ENCODE measurements at regions of chr9 and their contacts with region 1.

Region 1: DNA sequence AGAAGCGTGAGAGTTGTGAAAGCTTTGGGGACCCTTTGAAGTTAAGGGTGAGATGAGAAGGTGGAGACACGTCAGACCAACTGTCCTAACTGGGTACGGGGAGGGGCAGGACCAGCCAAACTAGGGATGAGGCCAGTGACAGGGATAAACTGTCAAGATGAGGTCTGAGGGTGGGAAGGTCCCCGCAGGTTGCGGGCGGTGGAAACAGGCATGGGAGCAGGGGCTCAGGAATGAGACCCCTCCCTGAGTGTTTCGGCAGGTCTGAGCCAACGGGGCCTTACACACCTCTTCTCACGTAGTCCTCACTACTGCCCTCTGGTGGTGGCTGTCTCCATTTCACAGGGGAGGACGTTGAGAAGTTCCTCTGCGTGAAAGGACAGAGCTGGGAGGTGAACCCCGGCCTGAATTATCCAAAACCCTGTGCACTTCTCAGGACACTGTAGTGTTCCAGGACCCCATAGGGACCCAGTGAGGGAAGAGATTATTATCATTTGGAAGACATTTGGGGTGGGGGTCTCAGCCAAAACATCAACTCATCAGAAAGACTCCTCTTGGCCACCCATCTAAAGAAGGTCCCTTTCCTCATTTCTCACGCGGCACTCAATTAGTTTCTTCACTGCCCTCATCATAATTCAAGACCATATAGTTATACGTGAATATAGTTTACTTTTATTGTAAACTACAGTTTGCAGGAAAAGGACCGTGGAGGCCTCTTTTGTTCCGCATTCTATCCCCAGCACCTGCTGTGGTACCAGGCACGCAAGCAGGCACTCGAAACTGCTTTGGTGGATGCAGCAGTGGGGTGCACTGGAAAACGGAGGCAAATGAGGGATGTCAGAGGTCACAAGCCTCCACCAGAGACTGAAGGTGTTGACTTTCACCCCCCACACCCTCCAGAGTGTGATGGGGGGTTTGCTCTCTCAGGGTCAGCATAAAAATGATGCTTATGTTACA is 21.7 kb upstream of the NANS start:
- DNase-seq: peak; percentile 92
- H3K4me3 Mint-ChIP-seq: peak overlapping the region; percentile 27
- H3K27ac Mint-ChIP-seq: no peak overlapping the region
- H3K4me1 Mint-ChIP-seq: peaks cover 8% of the 10 kb centered on the region
- H3K27me3 Mint-ChIP-seq: peaks cover 1% of the 10 kb centered on the region

Region 2: GRCh38 chr9:96122751-96123150 is 1912.1 kb before region 1 on chr9:
- CTCF ChIA-PET with region 1: no interaction called
- POLR2A ChIA-PET with region 1: no interaction called
- intact Hi-C with region 1: no loop called
- DNase-seq: no peak
- H3K4me3 Mint-ChIP-seq: no peak overlapping the region
- H3K27ac Mint-ChIP-seq: no peak overlapping the region
- H3K4me1 Mint-ChIP-seq: peaks cover 5% of the 10 kb centered on the region
- H3K27me3 Mint-ChIP-seq: peaks cover 11% of the 10 kb centered on the region

Region 3: GRCh38 chr9:97703437-97704344 is 331.2 kb before region 1 on chr9:
- CTCF ChIA-PET with region 1: interaction called, 3 read pairs
- POLR2A ChIA-PET with region 1: no interaction called
- intact Hi-C with region 1: loop called (anchors 10 kb)
- DNase-seq: peak; percentile 59
- H3K4me3 Mint-ChIP-seq: peak overlapping the region; percentile 40
- H3K27ac Mint-ChIP-seq: peak overlapping the region; percentile 91
- H3K4me1 Mint-ChIP-seq: peaks cover 35% of the 10 kb centered on the region
- H3K27me3 Mint-ChIP-seq: peaks cover 6% of the 10 kb centered on the region

Region 4: DNA sequence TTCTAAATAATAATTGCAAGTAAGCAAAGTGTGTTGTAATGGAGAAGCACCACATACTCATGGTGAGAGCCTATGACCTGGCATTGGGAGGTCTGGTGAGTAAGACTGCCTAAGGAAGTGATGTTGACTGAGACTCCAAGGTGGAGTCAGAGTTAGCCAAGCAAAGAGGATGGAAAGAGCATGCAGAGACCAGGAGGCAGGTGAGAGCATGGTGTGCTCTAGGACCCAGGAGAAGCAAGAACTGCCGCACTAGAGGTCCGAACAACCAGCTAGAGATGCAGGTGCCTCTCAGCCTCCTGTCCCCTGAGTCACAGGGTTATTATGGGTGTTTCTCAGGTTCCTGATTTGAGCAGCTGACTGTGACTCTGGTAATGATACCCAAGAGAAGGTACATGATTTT is 24.4 kb before region 1 on chr9:
- CTCF ChIA-PET with region 1: interaction called, 10 read pairs
- POLR2A ChIA-PET with region 1: no interaction called
- intact Hi-C with region 1: no loop called
- DNase-seq: peak; percentile 27
- H3K4me3 Mint-ChIP-seq: no peak overlapping the region
- H3K27ac Mint-ChIP-seq: no peak overlapping the region
- H3K4me1 Mint-ChIP-seq: peaks cover 24% of the 10 kb centered on the region
- H3K27me3 Mint-ChIP-seq: no peaks in the 10 kb centered on the region

Region 5: DNA sequence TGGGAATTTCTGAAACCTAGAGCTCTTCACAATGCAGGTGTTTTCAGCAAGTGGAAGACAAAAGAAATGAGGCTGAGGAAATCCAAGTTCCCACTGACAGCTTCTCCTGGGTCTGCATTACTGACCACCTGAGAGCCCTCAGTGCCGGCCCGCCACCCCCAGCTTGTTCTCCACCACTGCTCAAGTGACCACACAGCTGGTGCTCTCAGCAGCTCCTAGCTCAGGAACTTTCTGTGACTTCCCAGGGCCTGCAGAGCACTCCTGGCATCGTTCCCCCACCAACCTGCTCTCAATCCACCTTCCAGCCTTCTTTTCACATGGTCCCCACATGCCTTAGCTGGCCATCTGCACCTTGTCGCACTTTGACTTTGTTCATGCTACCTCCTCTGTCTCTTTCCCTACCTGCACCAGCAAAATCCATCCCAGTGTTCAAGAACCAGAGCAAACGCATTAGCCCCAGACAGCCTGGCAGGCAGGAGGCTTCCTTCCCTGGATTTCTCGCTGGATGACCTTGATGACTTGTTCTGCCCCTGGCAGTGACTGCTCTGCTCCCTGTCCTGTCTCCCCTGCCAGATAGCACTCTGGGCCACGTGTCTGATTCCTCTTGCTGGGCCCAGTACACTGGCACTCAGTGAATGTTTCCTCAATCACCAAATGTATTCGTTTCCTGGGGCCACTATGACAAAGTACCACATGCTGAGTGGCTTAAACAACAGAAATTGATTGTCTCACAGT is 13.4 kb before region 1 on chr9:
- CTCF ChIA-PET with region 1: interaction called, 22 read pairs
- POLR2A ChIA-PET with region 1: no interaction called
- intact Hi-C with region 1: no loop called
- DNase-seq: no peak
- H3K4me3 Mint-ChIP-seq: no peak overlapping the region
- H3K27ac Mint-ChIP-seq: no peak overlapping the region
- H3K4me1 Mint-ChIP-seq: no peaks in the 10 kb centered on the region
- H3K27me3 Mint-ChIP-seq: no peaks in the 10 kb centered on the region

Region 6: DNA sequence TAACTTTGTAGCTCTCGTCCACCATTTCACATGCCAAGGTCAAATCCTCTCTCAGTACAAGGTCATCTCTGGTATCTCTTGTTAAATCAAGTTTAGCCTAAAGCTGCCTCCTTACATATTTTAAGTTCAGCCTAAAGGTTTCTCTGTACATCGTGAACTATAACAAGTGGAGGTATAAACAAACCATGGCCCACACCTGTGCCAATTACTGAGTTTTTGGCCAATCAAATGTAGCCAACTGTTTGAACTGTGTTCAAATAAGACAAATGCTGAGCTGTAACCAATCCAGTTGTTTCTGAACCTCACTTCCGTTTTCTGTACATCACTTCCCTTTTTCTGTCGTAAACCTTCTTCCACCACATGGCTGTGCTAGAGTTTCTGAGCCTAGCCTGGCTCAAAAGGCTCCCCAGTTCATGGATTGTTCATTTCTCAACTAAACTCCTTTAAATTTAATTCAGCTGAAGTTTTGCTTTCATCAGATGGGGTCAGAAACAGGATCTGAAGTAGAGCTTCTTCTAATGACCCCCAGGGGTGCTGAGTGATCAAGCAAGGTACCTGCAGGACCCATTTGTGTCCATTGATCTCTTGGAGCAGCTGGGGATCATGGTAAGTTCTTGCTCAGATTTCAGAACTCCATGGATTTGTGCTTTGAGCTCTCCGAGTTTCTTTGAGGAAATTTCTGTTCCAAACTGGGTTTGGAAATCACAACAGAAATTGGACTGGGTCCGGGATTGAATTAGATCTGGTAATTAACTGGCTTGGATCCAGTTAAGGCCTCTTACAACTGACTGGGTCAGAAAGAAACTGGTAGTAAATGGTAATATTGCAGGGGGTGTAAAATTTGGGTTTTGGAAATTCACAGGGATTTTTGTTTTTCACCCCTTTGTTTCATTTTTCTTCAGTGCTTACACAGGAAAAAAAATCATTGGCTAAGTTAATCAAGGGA is 10.6 kb after region 1 on chr9:
- CTCF ChIA-PET with region 1: interaction called, 40 read pairs
- POLR2A ChIA-PET with region 1: no interaction called
- intact Hi-C with region 1: no loop called
- DNase-seq: peak; percentile 44
- H3K4me3 Mint-ChIP-seq: peak overlapping the region; percentile 84
- H3K27ac Mint-ChIP-seq: peak overlapping the region; percentile 83
- H3K4me1 Mint-ChIP-seq: peaks cover 24% of the 10 kb centered on the region
- H3K27me3 Mint-ChIP-seq: no peaks in the 10 kb centered on the region

Region 7: GRCh38 chr9:98056269-98057137 is 21.6 kb after region 1 on chr9 and contains the start of gene NANS:
- CTCF ChIA-PET with region 1: interaction called, 10 read pairs
- POLR2A ChIA-PET with region 1: interaction called, 3 read pairs
- intact Hi-C with region 1: no loop called
- DNase-seq: peak; percentile 95
- H3K4me3 Mint-ChIP-seq: peak within 1 kb of the TSS; percentile 92
- H3K27ac Mint-ChIP-seq: peak within 1 kb of the TSS; percentile 91
- H3K4me1 Mint-ChIP-seq: peaks cover 19% of the 10 kb centered on the region
- H3K27me3 Mint-ChIP-seq: no peaks in the 10 kb centered on the region
- total RNA-seq, gene NANS: 48.4 to 51.9 TPM

Measured in activated CD4-positive, alpha-beta memory T cell treated with anti-CD3 and anti-CD28 coated beads for 36 hours (primary cell).